ENCODE measurements at regions of chr12 and their contacts with region 1.

Region 1: DNA sequence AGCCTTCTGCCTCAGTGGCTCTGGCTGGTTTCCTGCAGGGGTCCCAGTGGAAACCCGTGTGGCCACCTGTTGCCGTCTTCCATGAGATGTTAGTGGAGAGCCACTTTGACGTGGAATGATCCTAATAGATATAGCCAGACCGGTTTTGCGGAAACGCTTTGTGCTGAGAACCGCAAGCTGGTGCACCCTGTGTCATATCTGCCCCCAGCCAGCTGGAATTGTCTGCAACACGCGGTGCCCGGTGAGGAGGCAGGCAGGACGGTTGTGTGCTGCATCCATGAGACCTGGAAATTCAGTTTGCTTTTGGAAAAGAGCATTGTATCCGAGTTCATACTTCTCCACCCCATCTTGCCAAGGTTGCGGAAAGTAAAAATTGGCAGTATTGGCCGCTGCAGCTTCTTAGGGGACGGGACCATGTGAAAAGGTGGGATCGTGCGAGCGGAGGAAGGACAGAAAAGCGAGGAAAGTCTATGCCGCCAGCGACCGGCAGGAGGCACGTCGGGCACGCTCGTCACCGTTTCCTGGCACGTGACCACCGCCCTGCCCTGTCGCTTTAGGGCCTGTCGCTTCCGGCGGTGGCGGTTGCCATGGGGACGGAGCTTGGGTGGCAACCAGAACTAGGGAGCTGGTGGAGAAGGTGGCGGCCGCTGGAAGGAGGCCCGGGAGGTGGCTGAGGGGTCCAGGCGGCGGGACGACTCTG is at the start of gene CFAP251:
- DNase-seq: peak; percentile 91 to 99 (median 97)

Region 2: GRCh38 chr12:121872546-121873215 is 45.4 kb before region 1 on chr12:
- intact Hi-C with region 1: no loop called
- DNase-seq: peak in 13 of 42 donors; percentile 7 to 45 (median 22)

Region 3: DNA sequence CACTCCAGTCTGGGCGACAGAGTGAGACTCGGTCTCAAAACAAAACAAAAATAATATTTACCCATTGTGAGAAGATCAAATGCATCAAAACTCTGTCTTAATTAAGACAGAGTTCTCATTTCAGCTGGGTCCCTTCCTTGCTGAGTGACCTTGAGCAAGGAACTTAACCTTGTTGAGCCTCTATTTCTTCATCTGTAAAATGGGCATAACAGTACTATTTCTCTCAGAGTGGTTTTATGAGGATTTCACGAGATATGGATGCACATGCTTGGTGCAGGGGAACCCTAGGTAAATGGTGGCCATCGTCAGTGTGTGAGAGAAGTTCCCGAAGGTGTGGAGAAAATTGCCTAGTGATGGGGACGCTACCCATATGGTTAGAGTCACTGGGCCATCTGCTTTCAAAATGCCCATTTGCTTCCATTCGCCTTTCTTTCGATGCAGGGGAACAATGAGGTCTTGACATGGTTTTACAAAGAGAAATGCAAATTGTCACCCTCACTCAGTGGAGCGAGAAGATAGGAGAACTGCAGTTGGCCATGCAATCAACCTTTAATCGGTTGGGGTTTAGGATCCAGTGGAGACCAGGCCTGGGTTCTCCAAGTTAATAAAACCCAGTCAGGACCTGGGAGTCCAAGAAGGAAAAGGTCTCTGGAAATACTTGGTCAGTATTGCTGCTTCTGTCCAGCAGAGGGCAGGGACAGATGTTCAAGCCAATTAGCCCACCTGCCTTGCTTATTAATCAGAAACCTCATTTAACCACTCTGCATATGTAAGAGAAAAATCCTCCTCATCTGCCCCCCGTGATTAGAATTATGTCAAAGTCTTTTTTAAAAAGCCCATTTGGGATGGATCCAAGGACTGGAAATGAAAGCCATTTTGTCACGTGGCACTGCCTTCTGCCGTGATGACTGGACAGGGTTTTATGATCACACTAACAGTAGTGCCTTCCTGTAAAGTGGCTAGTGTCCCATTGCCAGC is 37.4 kb after region 1 on chr12:
- intact Hi-C with region 1: no loop called
- DNase-seq: peak in 7 of 42 donors; percentile 10 to 49 (median 23)

Region 4: DNA sequence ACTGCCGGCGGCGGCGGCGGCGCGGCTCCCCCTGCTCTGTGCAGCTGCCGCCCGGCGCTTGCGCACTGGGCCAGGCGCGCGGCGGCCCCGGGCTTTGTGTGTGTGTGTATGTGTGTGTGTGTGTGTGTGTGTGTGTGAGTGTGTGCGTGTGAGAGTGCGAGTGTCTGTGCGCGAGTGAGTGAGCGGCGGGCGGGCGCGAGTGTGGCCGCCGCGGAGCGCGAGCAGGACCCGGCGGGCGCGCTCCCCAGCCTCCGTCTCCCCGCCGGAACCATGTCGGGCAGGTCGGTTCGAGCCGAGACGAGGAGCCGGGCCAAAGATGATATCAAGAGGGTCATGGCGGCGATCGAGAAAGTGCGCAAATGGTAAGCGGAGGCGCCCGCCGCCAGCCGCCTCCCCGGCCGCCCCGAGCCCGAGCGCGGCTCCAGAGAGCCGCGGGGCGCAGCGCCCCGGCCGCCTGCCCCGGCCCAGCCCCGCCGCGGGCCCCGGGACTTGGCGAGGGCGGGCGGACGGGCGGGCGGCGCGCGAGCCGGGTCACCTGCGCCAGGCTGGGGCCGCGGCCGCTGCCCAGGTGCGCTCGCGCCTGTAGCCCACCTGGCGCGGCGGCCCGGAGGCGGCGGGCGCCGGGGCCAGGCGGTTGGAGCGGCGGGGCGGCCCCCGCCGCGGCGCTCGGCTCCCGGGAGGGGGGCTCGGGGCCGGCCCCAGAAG is 103.8 kb after region 1 on chr12 and contains the start of gene BCL7A:
- intact Hi-C with region 1: loop called (anchors 10 kb)
- DNase-seq: peak; percentile 57 to 90 (median 78)

Measured in head of caudate nucleus (tissue), 42 donors.